IMR-90 (cell line): ENCODE measurements at regions of chr3 and their contacts with region 1.

Region 1: DNA sequence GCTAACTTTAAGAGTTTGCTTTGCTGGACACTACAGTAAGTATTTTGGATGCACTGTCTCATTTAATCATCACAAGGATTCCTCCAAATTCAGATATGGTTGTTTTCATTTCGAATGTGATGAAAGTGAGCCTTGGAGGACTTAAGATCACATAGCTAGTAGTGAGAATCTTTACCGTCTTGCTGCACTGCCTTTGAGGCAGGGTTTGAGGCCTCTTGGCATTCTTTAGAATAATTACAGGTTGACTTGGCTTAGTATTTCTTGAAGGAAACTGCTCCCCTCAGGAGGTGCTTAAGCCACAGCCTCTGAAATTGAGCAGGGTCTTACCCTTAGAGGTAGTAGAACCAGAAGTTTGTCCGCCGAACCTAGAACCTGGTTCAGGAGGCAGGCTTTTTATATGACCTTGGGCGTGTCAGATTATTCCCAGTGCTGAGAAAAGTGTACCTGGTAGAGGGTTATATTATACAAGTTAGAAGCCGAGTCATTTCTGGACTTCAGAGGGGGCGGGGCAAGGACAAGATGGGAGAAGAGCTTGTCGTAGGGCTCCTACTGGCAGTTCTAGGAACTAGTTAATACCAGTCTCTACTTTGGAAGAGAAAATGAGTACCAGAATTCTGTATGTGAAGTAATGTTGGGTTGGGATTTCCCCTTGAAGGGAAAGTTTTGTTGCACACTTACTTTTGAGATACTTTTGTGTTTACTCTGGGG is 1.1 kb downstream of the TFG start:
- DNase-seq: peak; percentile 77
- ATAC-seq: peak; percentile 25
- H3K4me3 ChIP-seq: peak overlapping the region; percentile 98
- H3K27ac ChIP-seq: peak overlapping the region; percentile 92
- H3K4me1 ChIP-seq: no peaks in the 10 kb centered on the region; the same call in 1 of the 2 replicates
- H3K27me3 ChIP-seq: no peaks in the 10 kb centered on the region
- CTCF ChIP-seq: peak; percentile 40
- POLR2A ChIP-seq: no peak
- RAD21 ChIP-seq: 0 out of 2 replicates have a peak, but pooled peaks have one; percentile 8

Region 2: GRCh38 chr3:100316641-100317069 is 393.8 kb before region 1 on chr3:
- CTCF ChIA-PET with region 1: no interaction called
- POLR2A ChIA-PET with region 1: no interaction called
- dilution Hi-C with region 1: no loop called
- in situ Hi-C with region 1: no loop called
- intact Hi-C with region 1: loop called (anchors 5 kb)
- DNase-seq: peak; percentile 68
- ATAC-seq: peak; percentile 94
- H3K4me3 ChIP-seq: no peak overlapping the region
- H3K27ac ChIP-seq: peak overlapping the region; percentile 45; the same call in 1 of the 2 replicates
- H3K4me1 ChIP-seq: 0 out of 2 replicates have a peak, but pooled peaks cover 2% of the 10 kb centered on the region
- H3K27me3 ChIP-seq: no peaks in the 10 kb centered on the region
- CTCF ChIP-seq: peak; percentile 70
- POLR2A ChIP-seq: no peak
- RAD21 ChIP-seq: peak; percentile 74

Region 3: GRCh38 chr3:100893590-100893989 is 183.2 kb after region 1 on chr3:
- CTCF ChIA-PET with region 1: no interaction called
- POLR2A ChIA-PET with region 1: no interaction called
- dilution Hi-C with region 1: no loop called
- in situ Hi-C with region 1: no loop called
- intact Hi-C with region 1: no loop called
- DNase-seq: peak; percentile 66
- ATAC-seq: peak; percentile 77
- H3K4me3 ChIP-seq: no peak overlapping the region
- H3K27ac ChIP-seq: no peak overlapping the region
- H3K4me1 ChIP-seq: no peaks in the 10 kb centered on the region
- H3K27me3 ChIP-seq: no peaks in the 10 kb centered on the region
- CTCF ChIP-seq: peak; percentile 81
- POLR2A ChIP-seq: peak; percentile 47; the same call in 1 of the 2 replicates
- RAD21 ChIP-seq: peak; percentile 96

Region 4: DNA sequence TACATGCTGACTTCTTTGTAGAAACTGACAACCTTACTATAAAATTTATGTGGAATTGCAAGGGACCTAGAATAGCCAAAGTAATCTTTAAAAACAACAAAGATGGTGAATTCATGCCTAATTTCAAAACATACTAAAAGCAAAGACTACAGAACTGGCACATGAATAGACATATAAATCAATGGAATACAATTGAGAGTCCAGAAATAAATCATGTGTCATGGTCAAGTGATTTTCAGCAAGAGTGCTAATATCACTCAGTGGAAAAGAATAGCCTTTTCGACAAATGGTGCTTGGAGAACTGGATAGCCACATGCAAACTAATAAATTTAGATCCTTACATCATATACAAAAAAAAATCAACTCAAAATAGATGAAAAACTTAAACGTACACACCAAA is 601.3 kb after region 1 on chr3:
- CTCF ChIA-PET with region 1: no interaction called
- POLR2A ChIA-PET with region 1: no interaction called
- dilution Hi-C with region 1: no loop called
- in situ Hi-C with region 1: no loop called
- intact Hi-C with region 1: no loop called
- DNase-seq: no peak
- ATAC-seq: no peak
- H3K4me3 ChIP-seq: no peak overlapping the region
- H3K27ac ChIP-seq: no peak overlapping the region
- H3K4me1 ChIP-seq: 0 out of 2 replicates have a peak, but pooled peaks cover 2% of the 10 kb centered on the region
- H3K27me3 ChIP-seq: no peaks in the 10 kb centered on the region
- CTCF ChIP-seq: no peak
- POLR2A ChIP-seq: no peak
- RAD21 ChIP-seq: no peak